CD4-positive, alpha-beta T cell (primary cell): ENCODE measurements at regions of chr3 and their contacts with region 1.

Region 1: DNA sequence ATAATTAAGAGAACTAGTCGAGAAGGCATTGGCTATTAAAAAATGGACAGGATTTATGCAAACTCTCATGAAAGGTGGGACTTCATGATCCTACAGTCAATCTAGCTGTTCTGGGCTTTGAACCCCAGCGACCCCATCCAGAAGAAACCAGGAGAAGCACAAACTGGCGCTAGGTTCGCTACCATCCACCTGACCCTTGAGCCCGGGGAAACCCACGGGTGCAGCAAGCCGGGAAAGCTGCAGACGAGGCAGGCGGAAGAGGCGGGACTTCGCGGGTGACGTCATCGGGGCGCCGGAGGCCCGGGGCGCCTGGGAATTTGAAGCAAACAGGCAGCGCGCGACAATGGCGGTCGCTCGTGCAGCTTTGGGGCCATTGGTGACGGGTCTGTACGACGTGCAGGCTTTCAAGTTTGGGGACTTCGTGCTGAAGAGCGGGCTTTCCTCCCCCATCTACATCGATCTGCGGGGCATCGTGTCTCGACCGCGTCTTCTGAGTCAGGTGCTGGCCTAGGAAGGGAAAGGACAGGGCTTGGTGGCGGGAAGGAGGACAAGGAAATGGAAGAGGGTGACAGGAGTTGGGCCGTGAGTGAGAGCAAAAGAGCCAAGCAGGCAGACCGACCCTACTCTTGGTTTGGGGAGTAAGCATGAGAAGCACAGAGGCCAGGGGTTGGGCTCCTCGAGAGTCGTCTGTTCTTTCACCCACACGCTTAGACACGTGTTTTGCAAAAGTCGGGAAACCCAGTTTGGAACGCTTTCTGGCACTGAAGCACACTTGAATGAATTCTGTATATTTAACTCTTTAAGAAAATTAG is at the start of gene UMPS:
- DNase-seq: peak; percentile 83 to 95 (median 91)
- ATAC-seq: peak; percentile 97
- H3K4me3 ChIP-seq: peak within 1 kb of the TSS; percentile 78
- H3K4me3 Mint-ChIP-seq: peak within 1 kb of the TSS; percentile 98
- H3K27ac ChIP-seq: peak within 1 kb of the TSS; percentile 54 to 76
- H3K27ac Mint-ChIP-seq: peak within 1 kb of the TSS; percentile 94
- H3K4me1 ChIP-seq: peaks cover 21% of the 10 kb centered on the region
- H3K4me1 Mint-ChIP-seq: peaks cover 44% of the 10 kb centered on the region
- H3K27me3 ChIP-seq: peaks cover 5 to 11% of the 10 kb centered on the region in 2 experiments
- H3K27me3 Mint-ChIP-seq: peaks cover 17% of the 10 kb centered on the region
- CTCF ChIP-seq: no peak
- total RNA-seq, gene UMPS: 19.5 to 19.7 TPM

Region 2: DNA sequence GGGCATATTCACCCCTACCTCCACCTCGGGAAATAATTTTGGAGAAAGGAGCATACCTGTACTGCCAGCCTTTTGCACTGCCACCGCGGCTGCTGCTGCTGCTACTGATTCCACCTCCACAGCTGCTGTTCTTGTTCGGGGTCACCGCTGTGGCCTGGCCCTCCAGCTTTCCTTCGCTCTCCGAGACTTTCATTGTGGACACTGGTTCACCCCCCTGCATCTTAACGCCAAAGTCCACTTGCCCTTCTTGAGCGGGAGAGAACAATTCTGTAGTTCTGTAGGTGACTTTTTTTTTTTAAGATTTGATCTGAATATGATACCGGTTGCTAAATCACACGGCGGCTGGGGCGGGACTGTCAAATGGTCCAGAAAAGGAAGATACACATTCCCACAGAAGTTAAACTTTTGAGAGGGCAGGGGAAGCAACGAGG is 864.3 kb after region 1 on chr3:
- CTCF ChIA-PET with region 1: no interaction called
- POLR2A ChIA-PET with region 1: interaction called, 6 read pairs
- intact Hi-C with region 1: loop called in 1 of 2 experiments (anchors 2 kb)
- DNase-seq: no peak
- ATAC-seq: no peak
- H3K4me3 ChIP-seq: peak overlapping the region; percentile 92
- H3K4me3 Mint-ChIP-seq: peak overlapping the region; percentile 97
- H3K27ac ChIP-seq: peak overlapping the region; percentile 70 to 80
- H3K27ac Mint-ChIP-seq: peak overlapping the region; percentile 84
- H3K4me1 ChIP-seq: peaks cover 45% of the 10 kb centered on the region
- H3K4me1 Mint-ChIP-seq: peaks cover 46% of the 10 kb centered on the region
- H3K27me3 ChIP-seq: no peaks in the 10 kb centered on the region
- H3K27me3 Mint-ChIP-seq: no peaks in the 10 kb centered on the region
- CTCF ChIP-seq: no peak